Sigmoid colon (tissue), 7 donors: ENCODE measurements at regions of chr9 and their contacts with region 1.

Region 1: DNA sequence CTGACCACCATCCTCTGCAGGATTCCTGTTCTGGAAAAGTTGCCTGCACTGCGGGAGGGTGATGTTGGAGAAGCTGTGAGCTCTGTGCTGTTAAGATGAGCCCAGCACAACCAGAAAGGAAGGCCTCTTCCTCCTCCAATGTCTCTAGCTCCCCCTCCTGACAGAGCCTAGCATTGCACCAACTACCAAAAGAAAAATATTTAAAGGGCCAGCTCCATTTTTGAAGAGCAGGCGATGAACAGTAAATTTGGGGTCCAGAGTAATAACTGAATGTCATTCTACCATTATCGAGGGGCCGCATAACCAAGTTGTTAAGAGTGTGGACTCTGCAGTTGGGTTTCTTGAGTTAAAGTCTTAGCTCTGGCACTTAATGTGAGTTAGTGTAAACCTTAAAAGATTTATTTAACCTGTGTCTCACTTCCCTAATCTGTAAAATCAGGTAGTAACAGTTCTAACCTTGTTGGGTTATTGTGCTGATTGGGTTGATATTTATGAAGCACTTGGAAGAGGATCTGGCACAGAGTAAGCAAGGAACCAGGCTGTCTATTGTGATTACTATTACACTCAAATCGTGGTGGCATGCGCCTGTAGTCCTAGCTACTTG is 3.9 kb downstream of the TEX53 start:
- DNase-seq: peak; percentile 86
- H3K4me3 ChIP-seq: no peak overlapping the region
- H3K27ac ChIP-seq: peak overlapping the region in 1 of 4 donors; percentile 39
- H3K4me1 ChIP-seq: peaks cover 0 to 8% (median 5%) of the 10 kb centered on the region in 4 donors
- H3K27me3 ChIP-seq: no peaks in the 10 kb centered on the region
- CTCF ChIP-seq: peak; percentile 73 to 91 (median 86)
- EP300 ChIP-seq: no peak
- POLR2A ChIP-seq: no peak

Region 2: DNA sequence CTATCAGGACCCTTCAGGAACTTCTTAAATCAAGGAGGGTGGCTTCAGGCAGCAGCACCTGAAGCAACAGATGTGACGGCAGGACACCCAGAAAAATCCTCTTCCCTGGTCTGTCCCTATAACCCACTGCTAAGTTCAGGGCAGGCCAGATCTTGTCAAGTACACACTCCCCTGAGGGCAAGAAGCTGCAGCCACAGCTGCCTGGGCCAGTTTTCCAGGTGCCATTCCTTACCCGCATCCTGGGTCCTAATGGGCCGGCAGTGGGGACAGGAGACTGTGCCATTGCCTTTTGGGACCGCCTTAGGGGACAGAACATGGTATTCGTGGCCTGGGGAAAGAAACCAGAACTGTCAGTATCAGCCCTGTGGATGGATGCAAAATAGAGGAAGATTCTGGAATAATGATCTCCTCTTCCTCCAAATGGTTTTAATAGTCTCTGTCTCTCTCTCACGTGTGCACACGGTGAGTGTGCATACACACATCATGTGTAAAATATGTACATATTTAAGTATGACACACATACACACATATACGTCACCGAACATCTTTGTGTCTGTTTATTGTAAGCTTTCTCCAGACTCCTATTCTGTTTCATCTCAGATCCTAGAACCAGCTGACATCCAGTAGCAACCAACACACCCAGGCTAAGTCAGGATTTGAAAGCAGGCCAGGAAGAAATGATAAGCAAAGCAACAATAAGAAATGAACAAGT is 310.0 kb before region 1 on chr9:
- intact Hi-C with region 1: loop called (anchors 5 kb)
- DNase-seq: no peak
- H3K4me3 ChIP-seq: no peak overlapping the region
- H3K27ac ChIP-seq: peak overlapping the region in 3 of 4 donors; percentile 74 to 87 (median 85)
- H3K4me1 ChIP-seq: peaks cover 0 to 42% (median 29%) of the 10 kb centered on the region in 4 donors
- H3K27me3 ChIP-seq: no peaks in the 10 kb centered on the region
- CTCF ChIP-seq: no peak
- EP300 ChIP-seq: peak; percentile 75 to 97 (median 90)
- POLR2A ChIP-seq: no peak

Region 3: GRCh38 chr9:114405294-114406034 is 248.2 kb before region 1 on chr9:
- intact Hi-C with region 1: loop called (anchors 1 kb)
- DNase-seq: peak; percentile 87
- H3K4me3 ChIP-seq: no peak overlapping the region
- H3K27ac ChIP-seq: no peak overlapping the region
- H3K4me1 ChIP-seq: peaks cover 0 to 5% (median 0%) of the 10 kb centered on the region in 4 donors
- H3K27me3 ChIP-seq: no peaks in the 10 kb centered on the region
- CTCF ChIP-seq: peak; percentile 56 to 78 (median 72)
- EP300 ChIP-seq: no peak
- POLR2A ChIP-seq: no peak

Region 4: GRCh38 chr9:114487607-114488300 is 165.9 kb before region 1 on chr9:
- intact Hi-C with region 1: loop called (anchors 1 kb)
- DNase-seq: peak; percentile 80
- H3K4me3 ChIP-seq: no peak overlapping the region
- H3K27ac ChIP-seq: no peak overlapping the region
- H3K4me1 ChIP-seq: peaks cover 0 to 15% (median 8%) of the 10 kb centered on the region in 4 donors
- H3K27me3 ChIP-seq: no peaks in the 10 kb centered on the region
- CTCF ChIP-seq: peak; percentile 80 to 90 (median 85)
- EP300 ChIP-seq: no peak
- POLR2A ChIP-seq: no peak

Region 5: DNA sequence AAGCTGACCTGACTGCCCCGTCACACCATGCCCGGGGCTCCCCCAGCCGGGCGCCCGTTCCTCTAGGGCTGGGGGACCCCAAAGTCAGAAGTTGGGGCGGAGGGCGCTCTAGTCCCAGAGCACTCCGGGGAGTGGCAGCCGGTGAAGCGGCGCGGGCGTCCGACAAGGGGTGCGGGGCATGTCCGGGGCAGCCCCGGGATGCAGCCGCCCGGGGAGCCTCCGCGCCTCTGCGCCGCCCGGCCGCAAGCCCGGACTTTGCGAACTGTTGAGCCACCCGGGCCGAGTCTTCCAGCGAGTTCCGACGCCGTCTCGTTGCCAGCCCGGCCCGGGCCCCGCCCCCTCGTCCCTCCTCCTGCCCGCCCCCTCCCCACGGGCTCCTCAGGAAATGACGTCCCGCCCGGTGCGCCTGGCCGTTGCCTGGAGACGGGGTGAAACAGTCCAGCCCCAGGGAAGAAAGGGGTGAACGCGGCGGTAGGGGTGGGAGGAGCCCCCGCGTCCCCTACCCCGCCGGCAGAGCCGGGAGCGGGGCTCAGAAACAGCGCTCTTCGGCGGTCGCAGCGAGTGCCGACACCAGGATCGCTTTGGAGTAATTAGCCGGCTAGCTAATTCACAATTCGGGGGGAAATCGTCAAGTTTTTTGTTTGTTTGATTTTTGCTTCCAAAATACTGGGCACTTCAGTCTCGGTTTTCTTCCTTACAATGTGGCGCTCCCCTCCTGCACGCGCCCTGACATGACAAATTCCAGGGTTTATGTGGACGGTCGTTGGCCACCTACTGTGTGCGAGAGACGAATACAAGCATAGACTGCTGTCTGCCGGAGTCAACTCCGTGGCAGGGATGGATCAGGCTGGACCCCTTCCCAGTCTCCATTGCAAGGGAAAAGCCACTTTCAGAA is 148.2 kb before region 1 on chr9 and contains the start of gene WHRN:
- intact Hi-C with region 1: loop called (anchors 5 kb)
- DNase-seq: peak; percentile 98
- H3K4me3 ChIP-seq: peak within 1 kb of the TSS; percentile 57 to 86 (median 70)
- H3K27ac ChIP-seq: peak within 1 kb of the TSS; percentile 80 to 93 (median 88)
- H3K4me1 ChIP-seq: peaks cover 0 to 54% (median 32%) of the 10 kb centered on the region in 4 donors
- H3K27me3 ChIP-seq: no peaks in the 10 kb centered on the region
- CTCF ChIP-seq: no peak
- EP300 ChIP-seq: peak in 2 of 4 donors; percentile 49 to 65
- POLR2A ChIP-seq: peak; percentile 38 to 61
- total RNA-seq, gene WHRN: 4.6 to 7.8 (median 6.3) TPM